Left colon (tissue), 2 donors: ENCODE measurements at regions of chr5 and their contacts with region 1.

Region 1: DNA sequence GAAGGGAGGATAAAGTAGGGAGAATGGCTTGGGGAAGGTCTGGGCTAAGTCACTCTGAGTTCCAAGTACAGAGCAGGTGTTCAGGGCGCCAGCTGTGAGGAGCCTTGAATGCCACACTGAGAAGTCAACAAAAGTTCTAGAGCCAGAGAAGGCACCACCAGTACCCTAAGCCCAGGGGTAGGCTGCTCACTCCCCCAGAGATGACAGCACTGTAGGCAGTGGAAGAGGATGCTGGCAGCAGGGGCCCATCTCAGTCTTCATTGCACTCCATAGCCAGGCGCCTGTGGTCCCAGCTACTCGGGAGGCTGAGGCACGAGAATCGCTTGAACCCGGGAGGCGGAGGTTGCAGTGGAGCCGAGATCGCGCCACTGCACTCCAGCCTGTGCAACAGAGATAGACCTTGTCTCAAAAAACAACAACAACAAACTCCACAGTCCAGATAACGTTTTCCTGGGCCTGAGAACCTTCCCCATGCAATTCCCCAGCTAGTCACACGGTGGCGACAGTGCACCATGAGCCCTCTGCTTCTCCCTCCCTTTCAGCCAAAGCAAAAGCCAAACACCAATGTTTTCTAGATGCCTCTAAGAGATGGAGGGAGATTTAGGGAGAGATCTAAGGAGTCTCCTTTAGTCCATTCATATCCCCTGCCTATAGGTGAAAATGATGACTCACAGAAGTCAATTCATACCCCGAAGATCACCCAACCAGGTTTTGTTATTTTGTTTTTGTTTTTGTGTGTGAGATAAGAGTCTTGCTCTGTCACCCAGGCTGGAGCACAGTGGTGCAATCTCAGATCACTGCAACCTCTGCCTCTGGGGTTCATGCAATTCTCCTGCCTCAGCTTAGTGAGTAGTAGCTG is 19.8 kb upstream of the NSD1 start:
- DNase-seq: peak in 1 of 2 donors; percentile 78
- ATAC-seq: peak; percentile 73

Region 2: DNA sequence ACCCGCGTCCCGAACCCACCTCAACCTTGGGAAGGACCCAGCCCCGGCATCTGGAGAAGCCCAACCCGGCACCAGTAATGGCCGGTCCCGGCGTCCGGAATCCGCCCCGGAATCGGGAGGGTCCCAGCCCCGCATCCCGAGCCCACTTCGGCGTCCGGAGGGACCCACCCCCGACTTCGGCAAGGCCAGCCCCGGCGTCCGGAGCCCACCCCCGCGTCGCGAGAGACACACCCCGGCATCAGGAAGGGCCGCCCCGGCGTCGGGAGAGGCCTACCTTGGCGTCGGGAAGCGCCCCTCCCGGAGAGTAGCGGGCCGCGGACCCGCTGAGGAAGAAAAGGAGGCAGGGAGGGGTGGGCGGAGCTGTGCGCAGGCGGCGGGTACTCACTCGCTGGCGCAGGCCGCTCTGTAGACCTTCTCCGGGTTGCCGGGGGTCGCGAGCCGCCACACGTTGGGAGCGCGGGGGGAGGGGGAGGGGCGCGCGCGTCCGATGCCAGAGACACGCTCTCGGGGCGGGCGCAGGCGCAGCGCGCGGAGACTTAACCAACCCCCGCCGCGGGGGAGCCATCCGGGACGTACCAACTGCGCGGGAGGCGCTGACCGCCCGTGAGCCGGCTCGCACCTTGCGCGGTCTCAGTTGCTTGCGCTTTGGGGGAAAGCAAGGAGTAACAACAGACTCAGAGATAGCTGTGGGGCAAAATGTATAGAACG is 107.4 kb before region 1 on chr5 and contains the start of gene UIMC1:
- intact Hi-C with region 1: no loop called
- DNase-seq: peak; percentile 88 to 96
- ATAC-seq: peak; percentile 90
- total RNA-seq, gene UIMC1: 33.1 to 33.3 TPM

Region 3: GRCh38 chr5:177071666-177072385 is 42.0 kb before region 1 on chr5:
- intact Hi-C with region 1: loop called in 1 of 2 experiments (anchors 5 kb)
- DNase-seq: peak; percentile 65 to 81
- ATAC-seq: peak; percentile 87

Region 4: GRCh38 chr5:177516604-177517568 is 403.1 kb after region 1 on chr5 and contains the start of gene DDX41:
- intact Hi-C with region 1: no loop called
- DNase-seq: peak; percentile 96 to 98
- ATAC-seq: peak; percentile 89
- total RNA-seq, gene DDX41: 74.3 to 79.9 TPM